ENCODE measurements at regions of chr2 and their contacts with region 1.

Region 1: DNA sequence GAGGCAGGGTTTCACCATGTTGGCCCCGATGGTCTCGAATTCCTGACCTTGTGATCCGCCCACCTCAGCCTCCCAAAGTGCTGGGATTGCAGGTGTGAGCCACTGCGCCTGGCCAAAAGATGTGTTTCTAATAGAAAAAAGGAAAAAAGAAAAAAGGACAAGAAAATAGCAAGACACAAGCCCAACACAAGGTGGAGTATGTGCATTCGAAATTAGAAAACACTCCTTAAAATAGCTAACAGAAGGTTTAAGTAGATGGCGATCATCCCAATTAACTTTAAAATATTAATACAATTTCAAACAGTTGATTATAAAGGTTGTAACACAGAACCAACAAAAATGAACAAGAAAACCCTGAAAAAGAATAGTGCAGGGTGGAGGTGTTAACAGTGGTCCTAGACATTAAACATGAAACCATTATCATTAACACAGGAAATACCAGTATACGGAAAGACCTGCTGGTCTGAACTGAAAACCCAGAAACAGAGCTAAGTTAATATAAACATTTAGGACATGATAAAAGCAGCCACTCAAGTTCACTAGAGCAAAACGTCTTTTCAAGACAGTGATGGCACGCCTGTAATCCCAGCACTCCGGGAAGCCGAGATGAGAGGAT is 57.9 kb downstream of the HDLBP start:
- DNase-seq: no peak
- H3K4me3 ChIP-seq: no peak overlapping the region
- CTCF ChIP-seq: no peak

Region 2: DNA sequence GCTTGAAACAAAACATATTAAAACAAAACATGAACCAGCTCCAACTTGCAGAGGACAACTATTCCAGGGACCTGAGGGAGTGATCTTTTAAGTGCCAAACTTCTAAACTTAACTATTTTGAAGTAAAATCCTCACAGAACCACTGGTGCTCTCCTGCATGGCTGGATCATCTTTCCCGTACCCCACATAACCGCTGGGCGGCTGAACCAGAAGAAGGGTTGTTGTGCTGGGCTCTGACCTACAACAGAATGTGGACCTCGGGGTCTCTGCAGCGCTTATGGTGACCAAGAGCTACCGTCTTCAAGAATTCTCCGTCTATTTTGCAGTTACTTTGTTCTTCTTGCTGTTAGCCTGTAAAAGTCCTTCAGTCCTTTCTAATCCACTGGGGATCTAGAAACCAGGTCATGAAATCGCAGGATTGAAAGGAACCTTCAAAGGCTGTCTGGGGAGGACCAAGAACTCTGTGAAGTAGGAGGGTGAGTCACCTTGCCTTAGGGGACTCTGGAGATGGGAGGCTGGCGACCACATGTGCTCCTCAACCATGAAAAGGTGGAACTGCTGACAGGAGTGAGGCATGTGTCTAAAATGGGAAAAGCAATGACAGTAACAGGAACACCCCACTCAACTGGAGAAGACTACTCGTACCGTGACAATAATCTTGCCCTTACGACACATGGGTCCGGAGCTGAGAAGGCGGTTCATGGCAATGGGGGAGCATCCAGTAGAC is 11.4 kb after region 1 on chr2:
- CTCF ChIA-PET with region 1: interaction called, 13 read pairs
- POLR2A ChIA-PET with region 1: interaction called, 6 read pairs
- DNase-seq: no peak
- H3K4me3 ChIP-seq: peak overlapping the region; percentile 16
- CTCF ChIP-seq: no peak

Measured in AG04449 (cell line).